ENCODE measurements at regions of chr12 and their contacts with region 1.

Region 1: DNA sequence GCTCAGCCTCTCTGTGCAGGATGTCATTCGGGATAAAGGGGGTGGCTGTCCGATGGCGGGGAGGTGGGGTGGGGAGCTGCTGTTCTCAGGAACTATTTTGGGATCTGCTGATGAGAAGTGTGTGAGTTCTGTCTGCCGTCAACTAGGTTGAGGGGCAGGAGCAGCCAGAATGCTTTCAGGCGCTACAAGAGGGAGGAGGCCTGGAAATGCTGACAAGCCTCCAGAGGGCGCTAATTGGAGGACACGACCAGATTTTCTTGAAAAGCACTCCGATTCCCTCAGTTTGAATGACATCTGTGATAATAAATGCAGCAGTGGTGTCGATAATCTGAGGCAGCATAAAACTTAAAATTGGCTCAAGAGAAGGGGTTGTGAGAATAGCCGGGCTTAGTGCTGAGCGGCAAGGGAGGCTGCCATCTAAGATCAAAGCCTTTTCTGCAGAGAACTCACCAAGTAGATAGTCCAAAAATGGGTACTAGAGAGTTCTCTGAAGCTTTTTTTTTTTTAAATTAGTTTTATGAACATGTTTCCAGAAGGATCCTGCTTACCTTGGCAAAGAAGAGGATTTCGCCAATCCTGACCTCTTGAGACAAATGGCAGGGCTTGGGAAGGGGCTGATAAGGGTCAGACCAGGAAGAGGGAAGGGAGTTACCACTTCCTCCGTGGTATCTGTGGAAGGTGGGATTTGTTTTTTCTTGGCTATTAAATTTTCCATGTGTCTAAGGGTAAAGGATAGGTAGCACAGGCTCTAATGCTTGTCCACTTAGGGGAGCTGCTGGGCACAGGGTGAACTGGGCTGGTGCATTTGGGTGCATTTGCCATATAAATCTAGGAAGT is 94.4 kb downstream of the CRACR2A start:
- DNase-seq: peak in 4 of 6 donors; percentile 28 to 45 (median 32)
- ATAC-seq: peak in 2 of 4 donors; percentile 55 to 66
- H3K4me3 ChIP-seq: no peak overlapping the region
- H3K27ac ChIP-seq: no peak overlapping the region
- H3K4me1 ChIP-seq: no peaks in the 10 kb centered on the region
- H3K27me3 ChIP-seq: no peaks in the 10 kb centered on the region
- CTCF ChIP-seq: peak in 1 of 4 donors; percentile 15

Region 2: DNA sequence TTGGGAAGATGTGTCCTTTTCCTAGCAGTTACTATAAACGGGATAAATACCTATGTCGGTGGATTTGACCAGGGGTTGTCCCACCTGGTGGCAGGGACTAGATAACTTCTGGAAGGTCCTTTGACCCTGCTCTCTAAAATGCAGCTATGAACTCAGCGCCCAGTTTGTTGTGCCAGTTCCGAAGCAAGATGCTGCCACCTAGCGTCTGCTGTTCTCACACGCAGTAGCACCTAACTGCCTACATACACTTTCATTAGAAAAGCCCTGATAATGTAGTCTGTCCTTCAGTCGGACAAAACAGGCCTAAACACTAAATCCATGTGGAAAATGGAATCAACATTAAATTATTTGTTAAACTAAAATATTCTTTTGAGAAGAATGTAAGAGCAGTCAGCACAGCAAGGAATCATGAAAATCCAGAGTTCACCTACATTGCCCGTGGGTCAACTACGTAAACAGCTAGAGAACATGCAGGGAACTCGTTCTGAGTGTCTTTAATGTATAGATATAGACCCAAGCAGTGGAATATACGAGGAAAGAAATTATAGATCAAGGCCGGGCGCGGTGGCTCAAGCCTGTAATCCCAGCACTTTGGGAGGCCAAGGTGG is 145.4 kb after region 1 on chr12:
- intact Hi-C with region 1: loop called in 1 of 3 experiments (anchors 10 kb)
- DNase-seq: peak in 5 of 6 donors; percentile 54 to 79 (median 71)
- ATAC-seq: peak; percentile 77 to 96 (median 93)
- H3K4me3 ChIP-seq: no peak overlapping the region
- H3K27ac ChIP-seq: no peak overlapping the region
- H3K4me1 ChIP-seq: peaks cover 0 to 3% (median 0%) of the 10 kb centered on the region in 3 donors
- H3K27me3 ChIP-seq: no peaks in the 10 kb centered on the region
- CTCF ChIP-seq: peak; percentile 62 to 78 (median 68)